Gastrocnemius medialis (tissue), 4 donors: ENCODE measurements at regions of chr2 and their contacts with region 1.

Region 1: DNA sequence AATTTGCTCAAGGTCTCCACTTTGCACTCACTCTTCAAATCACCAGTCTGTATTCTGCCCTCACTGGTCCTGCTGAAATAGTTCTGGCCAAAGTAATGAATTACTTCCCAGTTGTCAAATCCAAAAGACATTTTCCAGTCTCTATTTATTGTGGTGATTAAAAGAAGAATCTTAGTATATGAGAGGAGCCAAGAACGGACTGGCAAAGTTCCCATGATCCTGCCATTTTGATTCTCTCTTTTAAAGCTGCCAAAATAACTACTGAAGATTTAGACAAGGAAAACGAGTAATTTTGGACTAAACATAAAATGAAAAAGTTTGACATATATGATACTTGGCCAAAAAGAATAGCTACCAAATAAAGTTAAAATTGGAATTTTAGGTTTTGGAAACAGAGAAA is 12.0 kb downstream of the THSD7B start:
- DNase-seq: no peak
- ATAC-seq: no peak
- H3K4me3 ChIP-seq: no peak overlapping the region
- H3K27ac ChIP-seq: no peak overlapping the region
- H3K4me1 ChIP-seq: no peaks in the 10 kb centered on the region
- H3K27me3 ChIP-seq: no peaks in the 10 kb centered on the region
- CTCF ChIP-seq: no peak
- POLR2A ChIP-seq: no peak

Region 2: DNA sequence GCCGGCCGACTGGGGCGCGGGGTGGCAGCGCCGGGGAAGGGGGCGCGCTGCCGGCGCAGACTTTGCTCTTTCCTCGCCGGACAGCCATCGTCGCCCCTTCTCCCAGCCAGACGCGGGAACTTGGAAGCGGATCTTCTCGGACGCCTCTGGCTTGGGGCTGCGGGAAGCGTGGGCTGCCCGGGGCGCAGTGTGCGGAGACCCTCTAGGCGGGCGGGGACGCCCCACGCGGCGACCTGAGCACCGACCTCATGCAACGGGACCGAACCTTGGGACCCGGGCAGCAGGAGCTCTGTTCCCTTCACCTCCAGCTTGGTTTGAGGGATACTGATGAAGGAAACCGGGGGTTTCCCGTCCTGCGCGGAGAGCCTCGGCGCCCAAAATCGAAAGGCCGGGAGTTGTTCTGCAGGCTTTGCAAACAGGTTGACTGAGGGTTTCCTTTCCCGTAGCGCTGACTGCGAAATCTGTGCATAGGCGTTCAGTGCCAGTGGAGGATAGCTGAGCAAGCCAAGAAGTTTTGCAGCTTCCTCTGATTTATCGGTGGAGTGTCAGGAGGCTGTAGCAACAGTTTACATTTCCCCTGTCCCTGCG is 11.6 kb before region 1 on chr2:
- in situ Hi-C with region 1: no loop called
- intact Hi-C with region 1: loop called (anchors 1 kb)
- DNase-seq: no peak
- ATAC-seq: no peak
- H3K4me3 ChIP-seq: peak overlapping the region; percentile 5 to 42 (median 38)
- H3K27ac ChIP-seq: no peak overlapping the region
- H3K4me1 ChIP-seq: no peaks in the 10 kb centered on the region
- H3K27me3 ChIP-seq: peaks cover 15 to 36% (median 24%) of the 10 kb centered on the region in 3 donors
- CTCF ChIP-seq: no peak
- POLR2A ChIP-seq: no peak

Region 3: GRCh38 chr2:136823291-136823690 is 45.9 kb after region 1 on chr2:
- in situ Hi-C with region 1: no loop called
- intact Hi-C with region 1: no loop called
- DNase-seq: no peak
- ATAC-seq: no peak
- H3K4me3 ChIP-seq: no peak overlapping the region
- H3K27ac ChIP-seq: no peak overlapping the region
- H3K4me1 ChIP-seq: no peaks in the 10 kb centered on the region
- H3K27me3 ChIP-seq: no peaks in the 10 kb centered on the region
- CTCF ChIP-seq: no peak
- POLR2A ChIP-seq: no peak

Region 4: DNA sequence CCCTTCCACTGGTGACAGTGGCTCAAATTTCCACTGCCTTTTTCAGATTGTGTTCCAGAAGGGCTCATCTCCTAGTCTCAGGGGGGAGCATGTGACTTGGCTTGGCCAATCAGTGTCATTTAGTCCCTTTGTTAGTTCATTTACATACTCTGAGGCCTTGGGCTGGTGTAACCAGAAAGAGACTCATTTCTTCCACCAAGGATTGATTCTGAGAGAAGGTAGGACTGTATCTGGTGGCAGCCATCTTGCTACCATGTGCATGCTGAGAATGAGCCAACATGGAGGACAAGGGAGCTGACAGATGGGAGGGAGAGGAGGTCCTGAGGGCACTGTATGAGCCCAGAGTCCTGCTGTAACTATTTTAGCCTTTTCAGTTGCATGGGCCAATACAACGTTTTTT is 179.7 kb after region 1 on chr2:
- in situ Hi-C with region 1: no loop called
- intact Hi-C with region 1: no loop called
- DNase-seq: no peak
- ATAC-seq: no peak
- H3K4me3 ChIP-seq: no peak overlapping the region
- H3K27ac ChIP-seq: no peak overlapping the region
- H3K4me1 ChIP-seq: no peaks in the 10 kb centered on the region
- H3K27me3 ChIP-seq: no peaks in the 10 kb centered on the region
- CTCF ChIP-seq: no peak
- POLR2A ChIP-seq: no peak